ENCODE measurements at regions of chr11 and their contacts with region 1.

Region 1: GRCh38 chr11:47161134-47161854 is 15.4 kb downstream of the ARFGAP2 start:
- DNase-seq: no peak
- H3K4me3 ChIP-seq: no peak overlapping the region
- H3K27ac ChIP-seq: no peak overlapping the region
- H3K27me3 ChIP-seq: no peaks in the 10 kb centered on the region
- CTCF ChIP-seq: peak; percentile 89

Region 2: DNA sequence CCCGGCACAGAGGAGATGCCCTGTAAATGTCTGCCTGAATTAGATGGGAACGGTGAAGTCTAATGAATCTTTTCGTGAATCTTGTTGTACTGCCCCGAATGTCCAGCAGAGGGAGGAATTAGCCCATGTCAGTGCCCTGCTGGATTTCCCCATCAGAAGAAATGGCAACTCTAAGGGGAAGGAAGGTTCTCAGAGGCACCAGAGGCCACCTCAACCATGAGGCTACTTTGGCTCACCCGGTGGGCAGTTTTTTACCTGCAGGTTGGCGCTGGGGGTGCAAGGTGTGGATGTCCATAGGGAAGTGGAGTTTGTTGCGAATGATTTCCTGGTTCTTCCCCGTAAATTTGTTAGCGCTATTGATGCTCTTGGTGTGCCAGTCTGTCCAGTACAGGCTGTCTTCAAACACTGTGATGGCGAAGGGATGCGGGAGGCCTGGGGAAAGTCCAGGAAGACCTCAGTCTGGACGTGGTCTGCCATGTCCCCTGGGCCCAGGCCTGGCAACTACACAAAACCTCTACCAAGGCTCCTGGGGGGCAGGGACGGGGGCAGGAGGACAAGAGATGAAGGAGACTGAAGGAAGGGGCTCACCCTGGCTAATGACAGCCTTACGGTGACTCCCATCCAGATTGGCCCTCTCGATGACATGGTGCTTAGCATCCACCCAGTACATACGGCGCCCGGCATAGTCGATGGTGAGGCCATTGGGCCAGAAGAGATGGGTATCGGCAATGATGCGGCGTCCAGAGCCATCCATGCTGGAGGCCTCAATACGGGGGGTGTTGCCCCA is 271.4 kb before region 1 on chr11:
- CTCF ChIA-PET with region 1: interaction called, 16 read pairs
- POLR2A ChIA-PET with region 1: no interaction called
- DNase-seq: peak; percentile 39
- H3K4me3 ChIP-seq: no peak overlapping the region
- H3K27ac ChIP-seq: no peak overlapping the region
- H3K27me3 ChIP-seq: no peaks in the 10 kb centered on the region
- CTCF ChIP-seq: peak; percentile 90

Region 3: GRCh38 chr11:46916286-46917108 is 244.8 kb before region 1 on chr11:
- CTCF ChIA-PET with region 1: interaction called, 10 read pairs
- POLR2A ChIA-PET with region 1: interaction called, 3 read pairs
- DNase-seq: no peak
- H3K4me3 ChIP-seq: peak overlapping the region; percentile 65
- H3K27ac ChIP-seq: peak overlapping the region; percentile 57
- H3K27me3 ChIP-seq: no peaks in the 10 kb centered on the region
- CTCF ChIP-seq: peak; percentile 48

Region 4: GRCh38 chr11:47285969-47286770 is 124.9 kb after region 1 on chr11:
- CTCF ChIA-PET with region 1: no interaction called
- POLR2A ChIA-PET with region 1: no interaction called
- DNase-seq: no peak
- H3K4me3 ChIP-seq: no peak overlapping the region
- H3K27ac ChIP-seq: no peak overlapping the region
- H3K27me3 ChIP-seq: no peaks in the 10 kb centered on the region
- CTCF ChIP-seq: no peak

Measured in AG04450 (cell line).